ENCODE measurements at regions of chr9 and their contacts with region 1.

Region 1: GRCh38 chr9:36190388-36191287 is at the start of gene CLTA:
- DNase-seq: peak; percentile 98
- H3K4me3 Mint-ChIP-seq: peak within 1 kb of the TSS; percentile 96
- H3K27ac Mint-ChIP-seq: peak within 1 kb of the TSS; percentile 85
- H3K4me1 Mint-ChIP-seq: peaks cover 44% of the 10 kb centered on the region
- H3K27me3 Mint-ChIP-seq: peaks cover 5% of the 10 kb centered on the region
- total RNA-seq, gene CLTA: 173 and 177 TPM in 2 replicates

Region 2: GRCh38 chr9:36102742-36103495 is 87.7 kb before region 1 on chr9:
- intact Hi-C with region 1: loop called (anchors 1 kb)
- DNase-seq: peak; percentile 95
- H3K4me3 Mint-ChIP-seq: no peak overlapping the region
- H3K27ac Mint-ChIP-seq: peak overlapping the region; percentile 3
- H3K4me1 Mint-ChIP-seq: peaks cover 12% of the 10 kb centered on the region
- H3K27me3 Mint-ChIP-seq: no peaks in the 10 kb centered on the region

Region 3: GRCh38 chr9:36148311-36149051 is 42.2 kb before region 1 on chr9:
- intact Hi-C with region 1: loop called (anchors 1 kb)
- DNase-seq: peak; percentile 85
- H3K4me3 Mint-ChIP-seq: peak overlapping the region; percentile 5
- H3K27ac Mint-ChIP-seq: peak overlapping the region; percentile 45
- H3K4me1 Mint-ChIP-seq: peaks cover 76% of the 10 kb centered on the region
- H3K27me3 Mint-ChIP-seq: no peaks in the 10 kb centered on the region

Region 4: GRCh38 chr9:36258208-36258988 is 67.8 kb after region 1 on chr9 and contains the start of gene GNE:
- intact Hi-C with region 1: loop called (anchors 1 kb)
- DNase-seq: peak; percentile 100
- H3K4me3 Mint-ChIP-seq: peak within 1 kb of the TSS; percentile 93
- H3K27ac Mint-ChIP-seq: peak within 1 kb of the TSS; percentile 94
- H3K4me1 Mint-ChIP-seq: peaks cover 10% of the 10 kb centered on the region
- H3K27me3 Mint-ChIP-seq: peaks cover 2% of the 10 kb centered on the region
- total RNA-seq, gene GNE: 22.2 and 23.3 TPM in 2 replicates

Region 5: GRCh38 chr9:36275040-36275439 is 84.4 kb after region 1 on chr9:
- intact Hi-C with region 1: no loop called
- DNase-seq: no peak
- H3K4me3 Mint-ChIP-seq: no peak overlapping the region
- H3K27ac Mint-ChIP-seq: no peak overlapping the region
- H3K4me1 Mint-ChIP-seq: peaks cover 2% of the 10 kb centered on the region
- H3K27me3 Mint-ChIP-seq: peaks cover 3% of the 10 kb centered on the region

Measured in activated CD4-positive, alpha-beta T cell treated with anti-CD3 and anti-CD28 coated beads, Interleukin-2, amount 10 ng/mL, durations not matched to agents 24 days and 14 days (primary cell).